Esophagus muscularis mucosa (tissue), 4 donors: ENCODE measurements at regions of chrX and their contacts with region 1.

Region 1: GRCh38 chrX:68719904-68720614 is 72.6 kb downstream of the STARD8 start:
- DNase-seq: no peak
- H3K4me3 ChIP-seq: no peak overlapping the region
- H3K27ac ChIP-seq: no peak overlapping the region
- H3K4me1 ChIP-seq: no peaks in the 10 kb centered on the region
- H3K27me3 ChIP-seq: no peaks in the 10 kb centered on the region
- CTCF ChIP-seq: no peak
- EP300 ChIP-seq: no peak
- POLR2A ChIP-seq: no peak

Region 2: GRCh38 chrX:68090275-68090674 is 629.8 kb before region 1 on chrX:
- intact Hi-C with region 1: no loop called
- DNase-seq: no peak
- H3K4me3 ChIP-seq: no peak overlapping the region
- H3K27ac ChIP-seq: no peak overlapping the region
- H3K4me1 ChIP-seq: no peaks in the 10 kb centered on the region
- H3K27me3 ChIP-seq: no peaks in the 10 kb centered on the region
- CTCF ChIP-seq: no peak
- EP300 ChIP-seq: no peak
- POLR2A ChIP-seq: no peak

Region 3: DNA sequence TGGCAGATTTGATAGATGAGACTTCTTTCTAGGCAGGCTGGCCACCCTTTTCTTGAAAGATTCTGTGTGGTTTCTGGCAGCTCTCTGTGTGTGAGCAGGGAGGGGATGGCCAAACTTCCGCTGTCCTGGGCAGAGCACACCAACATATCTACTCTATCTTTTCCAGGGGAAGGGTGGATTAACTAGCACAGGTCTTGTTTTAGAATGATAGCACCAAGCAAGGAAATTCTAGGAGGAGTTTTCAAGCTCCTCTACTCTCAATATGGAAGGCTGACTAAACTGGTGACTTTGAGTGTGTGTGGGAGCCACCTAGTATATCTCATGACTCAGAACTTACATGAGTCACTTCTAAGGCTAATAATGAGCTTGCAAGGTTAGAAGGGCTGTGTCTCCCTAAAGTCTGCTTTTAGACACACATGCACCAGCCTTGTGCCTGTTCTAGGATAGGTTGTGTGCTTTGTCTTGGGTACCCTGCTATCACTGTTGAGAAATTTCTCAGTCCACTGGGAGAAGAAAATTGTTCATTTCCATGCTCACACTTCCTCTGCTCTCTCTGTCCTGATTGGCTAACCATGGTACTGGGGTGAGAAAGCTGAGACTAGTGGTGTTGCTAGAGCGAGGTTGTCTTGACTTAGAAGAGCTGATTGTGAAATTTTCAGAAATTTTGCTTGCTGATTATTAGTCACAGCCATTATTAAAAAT is 148.3 kb before region 1 on chrX:
- intact Hi-C with region 1: no loop called
- DNase-seq: no peak
- H3K4me3 ChIP-seq: no peak overlapping the region
- H3K27ac ChIP-seq: no peak overlapping the region
- H3K4me1 ChIP-seq: no peaks in the 10 kb centered on the region
- H3K27me3 ChIP-seq: no peaks in the 10 kb centered on the region
- CTCF ChIP-seq: no peak
- EP300 ChIP-seq: no peak
- POLR2A ChIP-seq: no peak

Region 4: DNA sequence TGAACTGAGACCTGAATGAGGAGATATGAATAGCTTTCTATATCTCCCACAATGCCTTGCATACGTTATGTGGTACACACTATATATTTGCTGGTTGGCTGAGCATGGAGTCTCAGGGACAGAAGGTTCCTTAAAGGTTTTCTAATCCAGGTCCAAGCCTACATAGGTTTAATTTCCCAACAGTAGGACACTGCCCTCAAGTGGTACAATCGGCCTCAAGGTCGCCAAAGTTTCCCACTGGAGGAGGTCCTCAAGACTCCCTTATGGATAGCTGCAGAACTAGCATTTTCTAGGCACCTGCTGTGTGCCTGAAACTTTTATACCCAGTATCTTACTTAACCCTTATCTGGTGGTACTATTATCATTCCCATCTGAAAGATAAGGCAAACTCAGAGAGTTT is 87.8 kb after region 1 on chrX:
- intact Hi-C with region 1: no loop called
- DNase-seq: no peak
- H3K4me3 ChIP-seq: no peak overlapping the region
- H3K27ac ChIP-seq: no peak overlapping the region
- H3K4me1 ChIP-seq: peaks cover 0 to 2% (median 0%) of the 10 kb centered on the region in 4 donors
- H3K27me3 ChIP-seq: no peaks in the 10 kb centered on the region
- CTCF ChIP-seq: peak; percentile 36 to 56 (median 43)
- EP300 ChIP-seq: no peak
- POLR2A ChIP-seq: no peak

Region 5: DNA sequence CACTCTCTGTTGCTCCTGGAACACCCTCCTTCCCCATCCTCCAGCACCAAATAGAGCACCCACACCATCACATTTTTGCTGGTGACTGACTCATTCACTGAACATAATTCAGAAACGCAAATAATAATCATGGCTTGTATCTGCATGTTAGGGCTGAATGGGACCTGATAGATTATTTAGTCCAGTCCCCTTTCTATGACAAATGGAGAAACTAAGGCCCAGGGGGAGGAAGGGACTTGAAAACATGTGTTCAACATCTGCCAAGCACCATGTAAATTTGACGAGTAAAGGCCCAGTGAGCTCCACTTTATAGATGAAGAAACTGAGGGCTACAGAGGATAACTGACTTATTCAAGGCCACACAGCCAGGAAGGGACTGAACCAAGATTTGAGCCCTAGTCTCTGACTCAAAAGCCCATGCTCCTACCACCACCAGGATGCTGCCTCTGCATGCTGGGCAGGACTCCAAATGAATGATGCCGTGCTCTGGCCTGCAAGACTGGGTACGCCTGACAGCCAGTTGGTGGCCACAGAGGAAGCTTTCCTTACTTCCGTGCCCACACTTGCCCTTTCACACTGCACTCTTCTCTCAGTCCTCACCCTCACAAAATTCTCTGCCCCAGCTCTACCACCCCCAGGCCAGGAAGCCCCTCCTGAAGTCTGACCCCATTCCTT is 578.5 kb after region 1 on chrX:
- intact Hi-C with region 1: loop called (anchors 10 kb)
- DNase-seq: no peak
- H3K4me3 ChIP-seq: no peak overlapping the region
- H3K27ac ChIP-seq: no peak overlapping the region
- H3K4me1 ChIP-seq: no peaks in the 10 kb centered on the region
- H3K27me3 ChIP-seq: peaks cover 0 to 11% (median 2%) of the 10 kb centered on the region in 4 donors
- CTCF ChIP-seq: no peak
- EP300 ChIP-seq: no peak
- POLR2A ChIP-seq: no peak